A549 (cell line): ENCODE measurements at regions of chr16 and their contacts with region 1.

Region 1: GRCh38 chr16:48623304-48624016 is 13.5 kb upstream of the N4BP1 start:
- DNase-seq: peak; percentile 84 to 85
- ATAC-seq: peak; percentile 97 to 99
- H3K4me3 ChIP-seq: peak overlapping the region; percentile 46
- H3K27ac ChIP-seq: peak overlapping the region; percentile 66 to 84
- H3K4me1 ChIP-seq: peaks cover 6% of the 10 kb centered on the region; the same call in 1 of the 3 replicates
- CTCF ChIP-seq: peak; percentile 91
- EP300 ChIP-seq: no peak
- POLR2A ChIP-seq: no peak
- RAD21 ChIP-seq: peak; percentile 89 to 91

Region 2: DNA sequence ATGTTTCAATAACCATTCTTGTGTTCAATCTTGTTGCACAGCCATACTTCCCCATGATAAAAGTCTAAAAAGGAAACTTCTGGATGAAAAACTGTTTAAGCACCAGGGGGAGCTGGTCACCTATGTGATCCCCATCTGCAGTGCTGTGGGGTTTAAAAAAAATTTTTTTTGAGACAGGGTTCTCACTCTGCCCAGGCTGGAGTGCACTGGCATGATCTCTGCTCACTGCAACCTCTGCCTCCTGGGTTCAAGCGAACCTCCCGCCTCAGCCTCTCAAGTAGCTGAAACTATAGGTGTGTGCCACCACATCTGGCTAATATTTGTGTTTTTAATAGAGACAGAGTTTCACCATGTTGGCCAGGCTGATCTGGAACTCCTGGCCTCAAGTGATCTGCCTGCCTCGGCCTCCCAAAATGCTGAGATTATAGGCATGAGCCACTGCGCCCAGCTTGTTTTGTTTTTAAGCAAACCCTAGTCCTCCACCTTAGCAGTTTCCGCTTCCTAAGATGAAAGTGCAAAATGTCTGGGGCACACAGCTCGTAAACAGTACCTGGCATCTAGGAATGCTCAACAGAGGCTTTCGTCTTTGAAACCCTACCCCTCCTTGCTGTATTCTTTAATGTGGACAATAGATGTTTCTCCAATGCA is 1675.4 kb before region 1 on chr16:
- CTCF ChIA-PET with region 1: interaction called, 10 read pairs
- POLR2A ChIA-PET with region 1: no interaction called
- DNase-seq: peak; percentile 38 to 55
- ATAC-seq: peak; percentile 90 to 91
- H3K4me3 ChIP-seq: no peak overlapping the region
- H3K27ac ChIP-seq: no peak overlapping the region
- H3K4me1 ChIP-seq: no peaks in the 10 kb centered on the region
- CTCF ChIP-seq: peak; percentile 79
- EP300 ChIP-seq: no peak
- POLR2A ChIP-seq: no peak
- RAD21 ChIP-seq: peak; percentile 87 to 88

Region 3: DNA sequence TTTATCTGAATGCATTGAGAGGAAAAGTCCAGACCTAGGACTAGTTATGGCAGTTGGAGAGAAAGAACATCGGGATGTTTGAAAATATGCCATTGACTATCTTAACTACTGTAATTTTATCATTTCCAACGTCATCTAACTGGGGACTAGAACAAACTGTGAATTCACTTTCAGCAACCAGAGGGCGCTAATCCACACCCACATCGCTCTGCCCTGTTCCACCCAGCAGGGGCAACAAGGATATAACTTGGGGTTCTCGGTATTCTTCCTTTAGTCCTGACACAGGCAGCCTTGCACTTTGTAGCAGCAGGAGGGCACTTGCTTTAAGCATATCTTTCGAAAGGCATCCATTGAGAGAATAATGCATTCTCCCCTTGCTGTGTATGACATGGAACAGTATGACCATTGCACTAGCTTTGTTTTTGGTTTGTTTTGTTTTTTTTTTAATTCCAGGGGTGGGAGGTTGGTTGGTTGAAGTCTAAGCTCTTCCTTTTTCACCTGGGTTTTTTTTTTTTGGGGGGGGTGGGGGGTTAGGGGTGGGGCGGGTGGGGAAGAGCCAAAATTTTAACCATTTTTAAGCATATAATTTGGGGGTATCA is 269.8 kb before region 1 on chr16:
- CTCF ChIA-PET with region 1: interaction called, 21 read pairs
- POLR2A ChIA-PET with region 1: no interaction called
- DNase-seq: peak; percentile 78 to 81
- ATAC-seq: peak; percentile 88 to 94
- H3K4me3 ChIP-seq: no peak overlapping the region
- H3K27ac ChIP-seq: no peak overlapping the region; a peak in 1 of 6 replicates
- H3K4me1 ChIP-seq: peaks cover 3% of the 10 kb centered on the region; the same call in 1 of the 3 replicates
- CTCF ChIP-seq: peak; percentile 89
- EP300 ChIP-seq: no peak
- POLR2A ChIP-seq: no peak
- RAD21 ChIP-seq: peak; percentile 79 to 82

Region 4: GRCh38 chr16:48535831-48536613 is 87.4 kb before region 1 on chr16:
- CTCF ChIA-PET with region 1: interaction called, 34 read pairs
- POLR2A ChIA-PET with region 1: no interaction called
- DNase-seq: no peak
- ATAC-seq: no peak; a peak in 1 of 6 replicates
- H3K4me3 ChIP-seq: no peak overlapping the region
- H3K27ac ChIP-seq: no peak overlapping the region
- H3K4me1 ChIP-seq: no peaks in the 10 kb centered on the region
- CTCF ChIP-seq: no peak
- EP300 ChIP-seq: no peak
- POLR2A ChIP-seq: no peak
- RAD21 ChIP-seq: no peak

Region 5: GRCh38 chr16:48576927-48577326 is 46.5 kb before region 1 on chr16:
- CTCF ChIA-PET with region 1: interaction called, 13 read pairs
- POLR2A ChIA-PET with region 1: no interaction called
- DNase-seq: peak in 1 of 2 experiments; percentile 11
- ATAC-seq: no peak
- H3K4me3 ChIP-seq: no peak overlapping the region
- H3K27ac ChIP-seq: no peak overlapping the region
- H3K4me1 ChIP-seq: peaks cover 27% of the 10 kb centered on the region
- CTCF ChIP-seq: no peak
- EP300 ChIP-seq: no peak
- POLR2A ChIP-seq: no peak
- RAD21 ChIP-seq: no peak

Region 6: DNA sequence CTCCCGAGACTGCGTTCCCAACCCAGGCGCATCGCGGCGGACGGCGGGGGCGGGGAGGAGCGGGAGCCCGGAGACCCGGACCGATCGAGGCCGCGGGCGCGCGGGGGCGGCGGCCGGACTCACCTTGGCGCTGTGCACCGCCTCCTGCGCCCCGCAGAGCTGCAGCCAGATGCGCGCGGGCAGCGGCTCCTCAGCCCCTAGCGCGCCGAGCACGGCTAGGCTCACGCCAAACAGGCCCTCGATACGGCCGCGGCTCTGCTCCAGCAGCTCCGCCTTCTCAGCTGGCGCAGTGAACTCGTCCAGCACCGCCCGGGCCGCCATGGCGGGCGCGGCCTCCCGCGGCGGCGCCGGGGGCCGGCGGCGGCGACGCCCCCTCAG is 13.8 kb before region 1 on chr16:
- CTCF ChIA-PET with region 1: interaction called, 68 read pairs
- POLR2A ChIA-PET with region 1: interaction called, 9 read pairs
- DNase-seq: peak; percentile 47 to 48
- ATAC-seq: peak; percentile 79 to 83
- H3K4me3 ChIP-seq: peak overlapping the region; percentile 61
- H3K27ac ChIP-seq: peak overlapping the region; percentile 81 to 96
- H3K4me1 ChIP-seq: peaks cover 39% of the 10 kb centered on the region
- CTCF ChIP-seq: no peak
- EP300 ChIP-seq: no peak
- POLR2A ChIP-seq: no peak
- RAD21 ChIP-seq: no peak